ENCODE measurements at regions of chr11 and their contacts with region 1.

Region 1: GRCh38 chr11:12235947-12236743 is 125.8 kb downstream of the MICAL2 start:
- DNase-seq: no peak
- H3K4me3 ChIP-seq: no peak overlapping the region
- H3K27ac ChIP-seq: no peak overlapping the region
- H3K4me1 ChIP-seq: no peaks in the 10 kb centered on the region; a peak in 1 of 7 replicates
- H3K27me3 ChIP-seq: no peaks in the 10 kb centered on the region
- CTCF ChIP-seq: peak in 2 of 3 experiments; percentile 56 to 67; a peak in 2 of 4 replicates
- EP300 ChIP-seq: no peak
- POLR2A ChIP-seq: no peak
- RAD21 ChIP-seq: peak; percentile 62 to 73

Region 2: GRCh38 chr11:12052676-12053605 is 183.2 kb before region 1 on chr11:
- CTCF ChIA-PET with region 1: interaction called, 76 read pairs
- POLR2A ChIA-PET with region 1: no interaction called
- DNase-seq: no peak
- H3K4me3 ChIP-seq: no peak overlapping the region
- H3K27ac ChIP-seq: no peak overlapping the region
- H3K4me1 ChIP-seq: peaks cover 0 to 3% (median under 1%) of the 10 kb centered on the region in 4 experiments; a peak in 2 of 7 replicates
- H3K27me3 ChIP-seq: no peaks in the 10 kb centered on the region
- CTCF ChIP-seq: peak; percentile 43 to 69 (median 62)
- EP300 ChIP-seq: no peak
- POLR2A ChIP-seq: no peak
- RAD21 ChIP-seq: peak; percentile 55 to 73

Region 3: GRCh38 chr11:12110201-12110713 is 125.9 kb before region 1 on chr11 and contains the start of gene MICAL2:
- CTCF ChIA-PET with region 1: interaction called, 11 read pairs
- POLR2A ChIA-PET with region 1: no interaction called
- DNase-seq: peak; percentile 61 to 87
- H3K4me3 ChIP-seq: peak within 1 kb of the TSS; percentile 36 to 71 (median 50)
- H3K27ac ChIP-seq: no peak within 1 kb of the TSS
- H3K4me1 ChIP-seq: peaks cover 0 to 10% (median 4%) of the 10 kb centered on the region in 4 experiments; a peak in 5 of 7 replicates
- H3K27me3 ChIP-seq: peaks cover 0 to 35% (median 30%) of the 10 kb centered on the region in 4 experiments; a peak in 5 of 7 replicates
- CTCF ChIP-seq: no peak
- EP300 ChIP-seq: no peak
- POLR2A ChIP-seq: no peak
- RAD21 ChIP-seq: no peak
- total RNA-seq, gene MICAL2: 4.1 and 4.2 TPM in 2 replicates

Region 4: DNA sequence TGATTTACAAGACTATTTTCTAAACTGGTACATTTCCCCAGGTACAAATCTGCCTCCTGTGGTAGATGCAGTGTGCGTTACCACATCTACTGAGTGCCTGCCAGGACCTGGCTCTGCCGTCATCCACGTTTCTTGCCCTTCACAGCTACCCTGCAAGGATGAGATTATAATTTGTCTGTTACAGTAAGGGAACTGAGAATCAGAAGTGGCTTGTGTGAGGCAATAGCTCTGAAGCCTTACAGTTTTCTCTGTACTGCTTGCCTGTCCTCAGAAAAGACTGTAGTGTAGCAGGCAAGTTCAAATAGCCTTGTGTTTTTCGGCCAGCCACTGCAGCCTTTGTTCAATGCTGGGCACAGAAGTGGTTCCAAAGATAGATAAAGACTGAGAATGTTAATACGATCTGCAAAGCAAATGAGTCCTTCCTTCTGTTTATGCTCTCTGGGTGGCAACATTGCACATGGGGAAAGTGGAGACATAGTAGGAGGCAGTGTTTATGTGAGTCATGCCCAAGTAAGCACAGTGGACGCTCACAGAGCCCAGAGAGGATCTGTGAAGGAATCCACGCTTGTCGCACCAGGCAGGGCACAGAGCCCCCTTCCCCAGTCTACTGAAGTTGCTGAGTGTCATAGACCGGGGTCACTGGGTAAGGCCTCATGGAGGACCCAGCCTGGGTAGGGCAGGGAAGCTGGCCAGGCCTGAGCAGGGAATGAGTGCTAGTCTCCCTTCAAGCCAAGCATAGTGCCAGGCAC is 76.6 kb before region 1 on chr11:
- CTCF ChIA-PET with region 1: interaction called, 12 read pairs
- POLR2A ChIA-PET with region 1: no interaction called
- DNase-seq: no peak
- H3K4me3 ChIP-seq: no peak overlapping the region
- H3K27ac ChIP-seq: no peak overlapping the region
- H3K4me1 ChIP-seq: no peaks in the 10 kb centered on the region; a peak in 1 of 7 replicates
- H3K27me3 ChIP-seq: no peaks in the 10 kb centered on the region
- CTCF ChIP-seq: no peak
- EP300 ChIP-seq: no peak
- POLR2A ChIP-seq: no peak
- RAD21 ChIP-seq: no peak

Region 5: DNA sequence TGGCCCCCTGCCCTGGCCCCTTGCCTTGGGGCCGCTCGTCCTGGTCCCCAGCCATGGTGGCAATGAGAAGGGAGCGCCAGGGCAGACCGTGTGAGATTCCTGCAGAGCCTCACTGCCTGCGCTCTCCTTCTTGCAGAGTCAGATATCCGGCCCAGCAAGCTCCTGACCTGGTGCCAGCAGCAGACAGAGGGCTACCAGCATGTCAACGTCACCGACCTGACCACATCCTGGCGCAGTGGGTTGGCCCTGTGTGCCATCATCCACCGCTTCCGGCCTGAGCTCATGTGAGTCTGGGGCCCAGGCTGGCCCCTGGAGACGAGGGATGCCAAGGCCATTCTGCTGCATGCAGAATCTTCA is 11.6 kb before region 1 on chr11:
- CTCF ChIA-PET with region 1: interaction called, 71 read pairs
- POLR2A ChIA-PET with region 1: no interaction called
- DNase-seq: no peak
- H3K4me3 ChIP-seq: no peak overlapping the region
- H3K27ac ChIP-seq: no peak overlapping the region
- H3K4me1 ChIP-seq: no peaks in the 10 kb centered on the region
- H3K27me3 ChIP-seq: no peaks in the 10 kb centered on the region
- CTCF ChIP-seq: no peak
- EP300 ChIP-seq: no peak
- POLR2A ChIP-seq: no peak
- RAD21 ChIP-seq: no peak

Region 6: DNA sequence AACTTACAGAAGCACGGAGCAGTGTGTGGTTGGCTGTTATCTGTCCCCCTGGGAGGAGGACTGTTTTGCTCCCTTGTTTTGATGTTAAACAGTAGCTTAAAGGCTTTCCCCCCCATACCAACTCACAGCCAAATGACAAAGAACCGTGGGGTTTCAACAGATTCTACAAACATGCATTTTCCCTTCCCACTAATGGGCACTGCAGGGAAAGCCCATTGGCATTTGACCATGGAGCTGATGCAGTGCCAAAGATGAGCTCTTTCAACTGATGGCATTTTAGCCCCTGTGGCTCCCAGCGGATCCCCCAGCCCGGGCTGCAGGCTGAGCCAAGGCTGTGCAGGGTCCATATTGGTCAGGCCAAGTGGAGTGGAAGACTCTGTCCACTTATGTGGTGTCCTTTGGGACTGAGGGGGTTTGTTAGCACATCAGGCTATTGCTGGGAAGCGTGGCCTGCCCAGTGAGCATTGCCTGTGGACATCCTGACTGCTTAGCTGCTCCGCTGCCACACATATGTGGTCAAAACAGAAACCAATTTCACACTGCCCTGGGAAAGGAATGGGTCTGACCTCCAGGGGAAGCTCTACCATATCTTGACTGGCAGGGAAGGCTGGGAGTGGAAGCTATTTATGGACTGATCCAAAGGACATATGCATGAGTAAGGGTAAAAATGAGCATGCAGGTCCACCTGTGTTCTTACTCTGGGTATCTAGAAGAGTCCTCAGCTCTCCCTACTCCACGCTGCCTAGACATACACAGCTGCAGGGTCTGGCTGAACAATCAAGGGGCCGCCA is 24.8 kb after region 1 on chr11:
- CTCF ChIA-PET with region 1: interaction called, 13 read pairs
- POLR2A ChIA-PET with region 1: no interaction called
- DNase-seq: no peak
- H3K4me3 ChIP-seq: no peak overlapping the region
- H3K27ac ChIP-seq: no peak overlapping the region
- H3K4me1 ChIP-seq: peaks cover 0 to 4% (median 0%) of the 10 kb centered on the region in 4 experiments; a peak in 1 of 7 replicates
- H3K27me3 ChIP-seq: no peaks in the 10 kb centered on the region
- CTCF ChIP-seq: no peak
- EP300 ChIP-seq: no peak
- POLR2A ChIP-seq: no peak
- RAD21 ChIP-seq: no peak

Region 7: DNA sequence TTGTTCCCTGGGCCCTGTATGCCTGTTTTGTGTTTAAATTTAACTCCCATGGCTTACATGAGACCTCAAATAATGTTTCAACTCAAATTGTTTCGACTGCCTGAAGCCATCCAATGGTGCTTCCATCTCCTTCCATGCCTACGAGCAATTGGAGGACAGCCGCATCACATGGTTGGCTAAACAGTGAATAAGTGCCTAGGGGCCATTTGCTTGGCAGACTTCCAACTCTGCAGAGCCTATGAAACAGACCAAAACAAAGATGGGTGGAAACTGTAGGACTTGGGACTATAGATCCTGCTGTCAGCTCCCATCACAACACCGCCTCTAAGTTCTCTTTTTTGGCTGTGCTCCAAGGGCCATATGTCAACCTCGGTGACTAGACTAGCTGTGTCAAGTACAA is 225.4 kb after region 1 on chr11:
- CTCF ChIA-PET with region 1: no interaction called
- POLR2A ChIA-PET with region 1: no interaction called
- DNase-seq: no peak
- H3K4me3 ChIP-seq: no peak overlapping the region
- H3K27ac ChIP-seq: no peak overlapping the region
- H3K4me1 ChIP-seq: no peaks in the 10 kb centered on the region
- H3K27me3 ChIP-seq: peaks cover 0 to 1% (median 0%) of the 10 kb centered on the region in 4 experiments; a peak in 1 of 7 replicates
- CTCF ChIP-seq: no peak
- EP300 ChIP-seq: no peak
- POLR2A ChIP-seq: no peak
- RAD21 ChIP-seq: no peak